T-cell (primary cell): ENCODE measurements at regions of chr1 and their contacts with region 1.

Region 1: DNA sequence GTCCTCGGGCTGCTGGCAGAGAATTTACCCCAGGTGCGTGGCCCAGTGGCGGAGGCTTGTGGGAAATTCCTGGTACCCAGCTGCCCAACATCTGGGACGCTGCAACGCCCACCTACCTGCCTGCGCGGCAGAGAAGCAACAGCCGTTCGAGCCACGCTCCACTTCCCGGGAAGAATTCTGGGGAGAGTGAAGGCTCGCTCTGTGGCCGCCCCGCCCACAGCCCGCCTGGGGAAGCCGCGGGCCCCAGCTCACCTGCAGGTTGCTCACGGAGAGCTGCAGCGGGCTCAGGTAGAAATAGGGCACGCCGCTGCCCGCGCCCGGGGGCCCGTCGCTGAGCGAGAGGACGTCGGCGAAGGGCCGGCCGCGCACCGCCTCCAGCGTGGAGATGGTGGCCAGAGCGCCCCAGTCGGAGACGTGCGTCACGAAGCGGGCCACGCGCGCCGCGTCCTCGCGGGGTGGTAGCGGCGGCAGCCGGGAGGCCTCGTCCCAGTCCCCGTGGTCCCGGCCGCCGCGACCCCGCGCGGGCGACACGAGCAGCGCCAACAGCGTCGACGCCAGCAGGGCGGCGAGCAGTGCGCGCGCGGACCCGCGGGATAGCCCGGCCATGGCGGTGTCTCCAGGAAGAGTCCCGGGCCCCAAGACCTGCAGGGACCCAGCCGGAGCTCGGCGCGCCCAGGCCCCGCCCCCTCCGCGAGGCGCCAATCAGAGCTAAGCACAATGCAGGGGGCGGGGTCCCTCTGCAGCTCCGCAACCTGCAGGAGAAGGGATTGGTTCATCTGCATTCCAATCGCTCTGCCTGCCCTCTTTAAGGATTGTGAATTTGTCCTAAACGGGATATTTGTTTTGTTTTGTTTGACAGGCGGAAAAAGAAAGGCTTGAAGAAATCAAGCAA is at the start of gene CREG1:
- DNase-seq: peak; percentile 74 to 94 (median 84)
- ATAC-seq: peak; percentile 98 to 99 (median 98)
- H3K4me3 ChIP-seq: peak within 1 kb of the TSS; percentile 69 to 71
- H3K4me3 Mint-ChIP-seq: peak within 1 kb of the TSS; percentile 86 to 90 (median 86)
- H3K27ac ChIP-seq: no peak within 1 kb of the TSS
- H3K27ac Mint-ChIP-seq: peak within 1 kb of the TSS; percentile 75 to 86
- H3K4me1 ChIP-seq: peaks cover 6 to 23% of the 10 kb centered on the region in 2 experiments
- H3K4me1 Mint-ChIP-seq: peaks cover 40 to 44% (median 44%) of the 10 kb centered on the region in 3 donors
- H3K27me3 ChIP-seq: no peaks in the 10 kb centered on the region
- H3K27me3 Mint-ChIP-seq: no peaks in the 10 kb centered on the region
- total RNA-seq, gene CREG1: 9.1 to 13.0 (median 10.9) TPM

Region 2: GRCh38 chr1:167220537-167221125 is 332.8 kb before region 1 on chr1 and contains the start of gene POU2F1:
- CTCF ChIA-PET with region 1: interaction called in 1 of 2 experiments, 14 read pairs
- POLR2A ChIA-PET with region 1: interaction called in 1 of 2 experiments, 4 read pairs
- DNase-seq: peak; percentile 96 to 100 (median 99)
- ATAC-seq: peak; percentile 82 to 86 (median 84)
- H3K4me3 ChIP-seq: peak within 1 kb of the TSS; percentile 88 to 98
- H3K4me3 Mint-ChIP-seq: peak within 1 kb of the TSS; percentile 83 to 94 (median 93)
- H3K27ac ChIP-seq: peak within 1 kb of the TSS; percentile 98
- H3K27ac Mint-ChIP-seq: peak within 1 kb of the TSS; percentile 97 to 98
- H3K4me1 ChIP-seq: peaks cover 12 to 19% of the 10 kb centered on the region in 2 experiments
- H3K4me1 Mint-ChIP-seq: peaks cover 34 to 42% (median 38%) of the 10 kb centered on the region in 3 donors
- H3K27me3 ChIP-seq: no peaks in the 10 kb centered on the region
- H3K27me3 Mint-ChIP-seq: no peaks in the 10 kb centered on the region
- total RNA-seq, gene POU2F1: 15.1 to 34.5 (median 22.6) TPM

Region 3: DNA sequence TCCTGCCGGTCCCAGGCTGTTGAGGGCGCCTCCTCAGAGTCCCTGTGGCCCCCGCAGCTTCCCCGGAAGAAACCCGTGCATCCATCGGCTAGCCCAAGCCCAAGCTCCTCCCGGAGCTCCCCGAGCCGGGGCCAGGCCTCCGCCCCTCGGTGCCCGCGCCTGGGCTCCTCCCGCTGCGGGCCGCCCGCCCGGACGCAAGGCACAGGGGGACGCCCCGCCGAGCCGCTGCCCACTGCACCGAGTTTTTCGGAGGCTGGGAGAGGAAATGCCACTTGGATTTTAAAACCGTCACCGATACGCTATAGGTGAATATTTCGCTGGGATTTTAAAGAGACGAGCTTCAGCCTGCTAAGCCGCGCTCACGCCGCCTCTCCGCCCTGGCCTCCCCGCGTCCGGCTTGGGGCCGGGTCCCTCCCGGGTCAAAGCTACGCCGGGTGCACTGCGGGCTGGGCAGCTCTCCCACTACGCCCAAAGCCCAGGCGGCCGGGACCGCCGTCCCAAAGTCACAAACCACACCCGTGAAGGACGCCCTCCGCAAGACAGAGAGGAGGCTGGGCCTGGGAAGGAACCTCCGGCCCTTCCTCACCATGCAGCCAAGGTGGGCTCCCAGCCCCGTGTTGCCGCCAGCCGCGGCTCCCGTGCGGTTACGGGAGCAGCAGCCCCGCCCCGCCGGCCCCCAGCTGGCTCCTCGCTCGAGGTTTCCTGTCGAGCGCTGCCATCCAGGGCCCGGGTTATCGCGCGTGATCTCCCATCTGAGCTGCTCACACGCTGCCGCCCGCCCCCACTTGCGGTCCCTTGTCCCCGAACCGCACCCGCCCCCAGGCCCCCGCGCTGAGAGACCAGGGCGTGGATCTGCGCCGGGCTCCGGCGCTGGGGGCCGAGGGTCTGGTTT is 98.2 kb before region 1 on chr1:
- CTCF ChIA-PET with region 1: interaction called, 3 to 10 read pairs
- POLR2A ChIA-PET with region 1: interaction called in 1 of 2 experiments, 3 read pairs
- DNase-seq: peak; percentile 58 to 91 (median 82)
- ATAC-seq: peak; percentile 68 to 79 (median 76)
- H3K4me3 ChIP-seq: peak overlapping the region; percentile 68 to 76
- H3K4me3 Mint-ChIP-seq: peak overlapping the region; percentile 79 to 90 (median 81)
- H3K27ac ChIP-seq: peak overlapping the region; percentile 96
- H3K27ac Mint-ChIP-seq: peak overlapping the region; percentile 61 to 97
- H3K4me1 ChIP-seq: peaks cover 53 to 82% of the 10 kb centered on the region in 2 experiments
- H3K4me1 Mint-ChIP-seq: peaks cover 71 to 77% (median 74%) of the 10 kb centered on the region in 3 donors
- H3K27me3 ChIP-seq: no peaks in the 10 kb centered on the region
- H3K27me3 Mint-ChIP-seq: no peaks in the 10 kb centered on the region

Region 4: DNA sequence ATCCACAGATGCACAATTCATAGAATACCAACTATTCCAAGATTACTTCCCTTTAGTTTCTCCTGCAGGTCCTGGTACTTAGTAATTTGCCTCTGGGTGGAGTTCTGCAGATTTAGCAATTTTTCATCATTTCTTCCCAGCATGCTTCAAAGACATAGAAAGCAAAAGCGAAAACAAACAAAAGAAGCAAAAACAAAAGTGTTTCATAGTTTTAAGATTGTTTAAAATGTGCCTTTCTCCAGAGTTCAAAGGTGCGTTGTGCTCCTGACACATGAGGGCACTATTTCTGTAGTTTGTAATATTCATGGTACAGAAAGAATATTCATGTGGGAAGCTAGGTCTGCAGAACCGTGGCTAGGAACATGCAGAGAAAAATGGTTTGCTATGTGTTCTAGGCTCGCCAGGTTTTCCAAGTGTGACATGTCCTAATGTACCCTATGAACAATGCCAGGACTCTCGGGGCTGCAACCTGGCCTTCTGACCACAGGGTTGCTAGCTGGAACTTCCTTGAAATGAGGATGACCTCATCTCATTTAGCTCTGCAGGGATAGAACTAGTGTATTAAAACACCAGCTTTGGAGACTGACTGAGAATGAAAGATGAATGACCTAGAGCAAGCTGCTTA is 46.7 kb after region 1 on chr1:
- CTCF ChIA-PET with region 1: interaction called, 3 to 4 read pairs
- POLR2A ChIA-PET with region 1: interaction called in 1 of 2 experiments, 11 read pairs
- DNase-seq: peak in 33 of 35 experiments; percentile 12 to 79 (median 35)
- ATAC-seq: peak; percentile 72 to 94 (median 76)
- H3K4me3 ChIP-seq: no peak overlapping the region
- H3K4me3 Mint-ChIP-seq: peak overlapping the region; percentile 26 to 79 (median 49)
- H3K27ac ChIP-seq: no peak overlapping the region
- H3K27ac Mint-ChIP-seq: peak overlapping the region; percentile 53 to 80
- H3K4me1 ChIP-seq: peaks cover 32 to 34% of the 10 kb centered on the region in 2 experiments
- H3K4me1 Mint-ChIP-seq: peaks cover 38 to 43% (median 42%) of the 10 kb centered on the region in 3 donors
- H3K27me3 ChIP-seq: no peaks in the 10 kb centered on the region
- H3K27me3 Mint-ChIP-seq: peaks cover 0 to 2% of the 10 kb centered on the region in 2 donors

Region 5: DNA sequence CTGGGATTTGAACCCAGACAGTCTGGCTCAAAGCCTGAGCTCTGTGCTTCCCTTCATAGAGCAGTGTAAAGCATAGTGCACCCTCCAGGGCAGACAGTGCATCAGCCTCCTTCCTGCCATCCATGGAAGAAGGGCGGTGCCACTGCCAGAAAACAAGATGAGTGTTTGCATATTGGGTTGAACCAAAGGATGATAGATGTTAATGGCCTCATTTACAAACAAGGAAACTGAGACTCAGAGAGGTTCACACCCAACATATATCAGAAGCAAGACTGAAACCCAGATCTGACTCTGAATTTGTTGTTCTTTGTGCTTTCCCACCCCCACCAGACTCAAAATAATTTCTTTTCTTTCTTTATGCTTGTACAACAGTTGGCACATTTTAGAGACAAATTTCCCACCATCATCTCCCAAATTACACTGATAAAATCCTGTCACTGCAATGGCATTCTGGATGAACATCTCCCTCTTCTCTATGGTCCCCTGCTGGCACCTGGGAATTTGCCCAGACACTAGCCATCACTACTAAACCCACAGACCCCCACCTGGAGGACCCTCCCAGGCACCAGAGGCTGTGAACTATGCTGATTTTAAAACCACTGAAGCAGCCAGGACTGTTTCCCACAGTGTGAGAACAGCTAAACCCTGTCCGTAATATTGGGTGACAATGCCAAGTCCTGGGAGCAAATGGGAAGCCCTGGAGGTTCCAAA is 123.0 kb after region 1 on chr1:
- CTCF ChIA-PET with region 1: interaction called in 1 of 2 experiments, 10 read pairs
- POLR2A ChIA-PET with region 1: no interaction called
- DNase-seq: no peak
- ATAC-seq: peak in 3 of 4 experiments; percentile 22 to 48 (median 34)
- H3K4me3 ChIP-seq: no peak overlapping the region
- H3K4me3 Mint-ChIP-seq: no peak overlapping the region
- H3K27ac ChIP-seq: peak overlapping the region; percentile 10
- H3K27ac Mint-ChIP-seq: peak overlapping the region; percentile 74 to 78
- H3K4me1 ChIP-seq: peaks cover 2 to 53% of the 10 kb centered on the region in 2 experiments
- H3K4me1 Mint-ChIP-seq: peaks cover 35 to 37% (median 36%) of the 10 kb centered on the region in 3 donors
- H3K27me3 ChIP-seq: no peaks in the 10 kb centered on the region
- H3K27me3 Mint-ChIP-seq: no peaks in the 10 kb centered on the region